Uterus (tissue), 4 donors: ENCODE measurements at regions of chr2 and their contacts with region 1.

Region 1: DNA sequence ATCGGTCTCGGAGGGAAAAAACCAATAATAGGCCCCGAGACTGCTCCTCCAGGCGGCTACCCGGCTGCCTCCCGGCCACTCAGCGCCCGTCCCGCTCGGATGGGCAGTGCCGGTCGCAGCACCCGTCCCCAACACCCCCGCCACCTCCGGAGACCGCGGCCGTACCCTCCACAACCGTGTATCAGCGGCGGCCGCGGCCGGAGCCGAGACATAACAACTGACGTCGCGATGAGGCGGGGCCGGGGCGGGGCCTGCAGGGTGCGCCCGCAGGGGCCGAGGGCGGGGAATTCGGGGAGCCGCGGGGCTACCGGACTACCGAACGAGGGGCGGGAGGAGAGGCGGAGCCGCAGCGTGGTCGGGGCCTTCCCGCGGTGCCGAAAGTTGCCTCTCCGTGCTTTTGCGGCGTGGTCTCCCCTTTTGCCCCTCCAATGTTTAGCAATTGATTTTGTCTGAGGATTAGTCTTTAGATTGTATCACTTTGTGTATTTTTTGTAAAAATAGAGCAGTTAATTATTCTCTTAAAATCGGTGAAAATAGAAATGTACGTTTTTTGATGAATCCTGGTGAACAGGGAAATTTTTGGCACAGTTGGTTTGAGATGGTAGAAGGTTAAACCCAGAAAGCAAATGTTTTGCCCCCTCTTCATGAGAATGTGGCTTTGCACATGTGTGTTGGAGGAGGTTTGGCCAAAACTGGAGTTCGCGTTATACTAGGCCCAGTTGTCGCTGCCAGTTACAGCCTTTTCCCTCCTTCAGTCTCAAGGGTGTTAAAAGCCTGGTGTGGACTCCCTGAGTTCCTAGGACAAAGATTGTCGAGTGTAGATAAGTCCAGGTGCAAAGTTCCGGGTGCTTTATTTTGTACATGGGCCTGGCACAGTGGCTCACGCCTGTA is at the start of gene RNF103:
- DNase-seq: peak; percentile 96 to 97
- H3K4me3 ChIP-seq: peak within 1 kb of the TSS; percentile 75 to 90
- H3K27ac ChIP-seq: peak within 1 kb of the TSS; percentile 98 to 99
- H3K4me1 ChIP-seq: peaks cover 0 to 8% of the 10 kb centered on the region in 2 donors
- H3K27me3 ChIP-seq: no peaks in the 10 kb centered on the region
- CTCF ChIP-seq: peak in 1 of 4 experiments; percentile 24
- POLR2A ChIP-seq: peak; percentile 100
- total RNA-seq, gene RNF103: 33.2 to 55.5 (median 51.8) TPM

Region 2: GRCh38 chr2:86440631-86441391 is 183.1 kb before region 1 on chr2 and contains the start of gene KDM3A:
- intact Hi-C with region 1: loop called (anchors 10 kb)
- DNase-seq: peak; percentile 99
- H3K4me3 ChIP-seq: peak within 1 kb of the TSS; percentile 81 to 86
- H3K27ac ChIP-seq: peak within 1 kb of the TSS; percentile 97 to 98
- H3K4me1 ChIP-seq: peaks cover 15 to 18% of the 10 kb centered on the region in 2 donors
- H3K27me3 ChIP-seq: no peaks in the 10 kb centered on the region
- CTCF ChIP-seq: peak in 2 of 4 experiments; percentile 4 to 12
- POLR2A ChIP-seq: no peak
- total RNA-seq, gene KDM3A: 22.5 to 54.3 (median 48.6) TPM

Region 3: DNA sequence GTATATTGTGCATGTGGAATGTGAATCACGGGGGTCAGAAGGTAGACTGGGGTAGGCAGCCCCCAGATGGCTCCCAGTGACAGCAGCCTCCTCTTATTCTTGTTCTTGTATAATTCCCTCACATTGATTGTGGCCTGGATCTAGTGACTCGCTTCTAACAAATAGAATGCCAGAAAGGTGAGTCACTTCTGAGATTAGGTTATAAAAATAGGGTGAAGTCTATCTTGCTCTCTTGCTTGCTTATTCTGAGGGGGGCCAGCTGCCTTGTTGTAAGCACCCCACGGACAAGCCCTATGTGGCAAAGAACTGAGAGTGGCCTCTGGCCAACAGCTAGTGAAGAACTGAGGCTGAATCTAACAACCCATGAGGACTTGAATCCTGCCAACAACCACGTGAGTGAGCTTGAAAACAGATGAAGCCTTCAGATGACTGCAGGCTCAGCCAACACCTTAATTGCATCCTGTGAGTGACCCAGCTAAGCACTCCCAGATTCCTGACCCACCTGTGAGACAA is 80.6 kb after region 1 on chr2:
- intact Hi-C with region 1: loop called (anchors 10 kb)
- DNase-seq: peak; percentile 26 to 35
- H3K4me3 ChIP-seq: no peak overlapping the region
- H3K27ac ChIP-seq: peak overlapping the region; percentile 11 to 52
- H3K4me1 ChIP-seq: peaks cover 0 to 4% of the 10 kb centered on the region in 2 donors
- H3K27me3 ChIP-seq: no peaks in the 10 kb centered on the region
- CTCF ChIP-seq: no peak
- POLR2A ChIP-seq: no peak